ENCODE measurements at regions of chr3 and their contacts with region 1.

Region 1: GRCh38 chr3:4303187-4304123 is at the start of gene SETMAR:
- DNase-seq: no peak
- H3K4me3 ChIP-seq: peak within 1 kb of the TSS; percentile 83
- CTCF ChIP-seq: no peak

Region 2: GRCh38 chr3:4314688-4315087 is 11.2 kb after region 1 on chr3:
- CTCF ChIA-PET with region 1: interaction called, 10 read pairs
- POLR2A ChIA-PET with region 1: no interaction called
- DNase-seq: no peak
- H3K4me3 ChIP-seq: no peak overlapping the region
- CTCF ChIP-seq: no peak

Measured in AG04449 (cell line).